ENCODE measurements at regions of chr17 and their contacts with region 1.

Region 1: GRCh38 chr17:47099987-47100711 is 88.9 kb downstream of the CDC27 start:
- H3K4me3 Mint-ChIP-seq: peak overlapping the region; percentile 97
- H3K27ac Mint-ChIP-seq: peak overlapping the region; percentile 92
- H3K4me1 Mint-ChIP-seq: peaks cover 23% of the 10 kb centered on the region
- H3K27me3 Mint-ChIP-seq: no peaks in the 10 kb centered on the region

Region 2: DNA sequence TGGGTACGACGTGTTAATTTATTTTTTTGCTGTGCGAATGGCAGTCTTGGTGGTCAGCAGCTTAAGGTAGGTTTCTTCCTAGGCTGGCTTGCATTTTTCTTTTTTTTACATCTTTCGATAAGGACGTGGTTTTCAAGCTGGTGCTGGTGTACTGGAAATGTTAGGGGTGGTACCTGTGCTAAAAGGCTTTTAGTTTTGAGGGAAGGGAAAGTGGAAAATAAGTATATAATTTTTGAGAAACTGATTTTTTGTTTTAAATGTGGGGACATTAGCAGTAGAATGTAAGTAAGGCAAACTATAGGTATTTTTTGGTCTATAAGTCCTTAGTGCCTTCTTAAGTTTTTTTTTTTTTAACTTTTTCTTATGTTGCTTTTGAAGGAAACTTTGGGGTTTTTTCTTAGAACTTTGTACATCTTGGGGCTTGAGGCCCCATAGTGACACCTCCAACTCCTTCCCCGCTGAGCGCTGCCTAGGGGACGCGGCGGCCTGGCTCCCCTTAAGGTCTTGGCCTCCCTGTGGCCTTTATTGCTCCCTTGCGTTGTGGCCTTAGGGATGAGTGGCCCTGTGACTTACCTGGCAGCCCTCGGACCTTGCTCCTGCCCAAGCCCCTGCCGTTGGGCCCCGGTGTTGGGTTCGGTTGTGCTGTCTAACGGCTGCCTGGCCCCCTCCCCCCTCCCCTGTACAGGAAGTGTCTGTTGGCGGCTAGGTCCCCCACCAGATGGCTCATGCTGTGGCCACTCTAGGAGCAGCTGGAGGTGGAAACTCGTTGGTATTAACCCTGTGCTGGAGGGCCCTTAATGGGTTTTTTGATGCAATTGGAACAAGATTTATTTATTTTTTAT is 33.1 kb before region 1 on chr17:
- intact Hi-C with region 1: loop called (anchors 5 kb)
- H3K4me3 Mint-ChIP-seq: peak overlapping the region; percentile 83
- H3K27ac Mint-ChIP-seq: peak overlapping the region; percentile 90
- H3K4me1 Mint-ChIP-seq: peaks cover 39% of the 10 kb centered on the region
- H3K27me3 Mint-ChIP-seq: no peaks in the 10 kb centered on the region

Region 3: GRCh38 chr17:47184681-47185080 is 84.5 kb after region 1 on chr17:
- intact Hi-C with region 1: no loop called
- H3K4me3 Mint-ChIP-seq: no peak overlapping the region
- H3K27ac Mint-ChIP-seq: no peak overlapping the region
- H3K4me1 Mint-ChIP-seq: peaks cover 42% of the 10 kb centered on the region
- H3K27me3 Mint-ChIP-seq: no peaks in the 10 kb centered on the region

Region 4: GRCh38 chr17:47315451-47316266 is 215.5 kb after region 1 on chr17:
- intact Hi-C with region 1: no loop called
- H3K4me3 Mint-ChIP-seq: no peak overlapping the region
- H3K27ac Mint-ChIP-seq: no peak overlapping the region
- H3K4me1 Mint-ChIP-seq: no peaks in the 10 kb centered on the region
- H3K27me3 Mint-ChIP-seq: peaks cover 3% of the 10 kb centered on the region